Activated CD4-positive, alpha-beta memory T cell treated with anti-CD3 and anti-CD28 coated beads for 36 hours (primary cell): ENCODE measurements at regions of chr9 and their contacts with region 1.

Region 1: GRCh38 chr9:132412089-132412488 is 2.1 kb downstream of the CFAP77 start:
- DNase-seq: peak; percentile 48
- H3K4me3 Mint-ChIP-seq: no peak overlapping the region
- H3K27ac Mint-ChIP-seq: no peak overlapping the region
- H3K4me1 Mint-ChIP-seq: peaks cover 26% of the 10 kb centered on the region
- H3K27me3 Mint-ChIP-seq: peaks cover 48% of the 10 kb centered on the region

Region 2: DNA sequence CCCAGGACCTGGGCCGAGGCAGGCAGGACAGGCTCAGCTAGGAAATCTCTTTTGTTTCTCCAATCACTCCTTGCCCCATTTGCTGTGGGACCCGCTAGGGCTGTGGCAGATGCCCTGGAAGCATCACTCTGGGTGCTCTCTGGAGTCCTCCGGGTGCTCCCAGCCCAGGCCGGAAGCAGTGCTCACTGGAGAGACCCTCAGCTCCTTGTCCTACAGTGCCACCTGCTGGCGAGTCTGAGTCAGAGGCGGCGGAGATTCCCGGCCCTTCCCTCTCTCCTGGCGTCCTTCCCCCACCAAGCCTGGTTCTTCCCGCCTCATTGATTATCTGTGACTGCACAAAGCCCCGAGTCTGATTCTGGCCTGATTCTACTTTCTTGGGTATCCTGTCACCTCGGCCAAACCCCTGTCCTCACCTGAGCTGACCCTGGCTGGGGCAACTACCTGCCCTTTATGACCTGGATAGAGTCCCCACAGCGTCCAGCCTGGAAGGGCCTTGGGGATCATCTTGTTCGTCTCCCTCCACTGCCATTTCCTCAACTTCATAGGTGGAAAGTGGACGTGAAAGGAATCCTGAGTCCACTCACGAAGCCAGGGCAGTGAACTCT is 163.0 kb after region 1 on chr9:
- CTCF ChIA-PET with region 1: interaction called, 46 read pairs
- POLR2A ChIA-PET with region 1: no interaction called
- intact Hi-C with region 1: no loop called
- DNase-seq: peak; percentile 67
- H3K4me3 Mint-ChIP-seq: no peak overlapping the region
- H3K27ac Mint-ChIP-seq: no peak overlapping the region
- H3K4me1 Mint-ChIP-seq: no peaks in the 10 kb centered on the region
- H3K27me3 Mint-ChIP-seq: peaks cover 46% of the 10 kb centered on the region

Region 3: GRCh38 chr9:132800038-132800648 is 388.1 kb after region 1 on chr9:
- CTCF ChIA-PET with region 1: no interaction called
- POLR2A ChIA-PET with region 1: no interaction called
- intact Hi-C with region 1: loop called (anchors 2 kb)
- DNase-seq: peak; percentile 74
- H3K4me3 Mint-ChIP-seq: no peak overlapping the region
- H3K27ac Mint-ChIP-seq: no peak overlapping the region
- H3K4me1 Mint-ChIP-seq: peaks cover 5% of the 10 kb centered on the region
- H3K27me3 Mint-ChIP-seq: peaks cover 28% of the 10 kb centered on the region

Region 4: DNA sequence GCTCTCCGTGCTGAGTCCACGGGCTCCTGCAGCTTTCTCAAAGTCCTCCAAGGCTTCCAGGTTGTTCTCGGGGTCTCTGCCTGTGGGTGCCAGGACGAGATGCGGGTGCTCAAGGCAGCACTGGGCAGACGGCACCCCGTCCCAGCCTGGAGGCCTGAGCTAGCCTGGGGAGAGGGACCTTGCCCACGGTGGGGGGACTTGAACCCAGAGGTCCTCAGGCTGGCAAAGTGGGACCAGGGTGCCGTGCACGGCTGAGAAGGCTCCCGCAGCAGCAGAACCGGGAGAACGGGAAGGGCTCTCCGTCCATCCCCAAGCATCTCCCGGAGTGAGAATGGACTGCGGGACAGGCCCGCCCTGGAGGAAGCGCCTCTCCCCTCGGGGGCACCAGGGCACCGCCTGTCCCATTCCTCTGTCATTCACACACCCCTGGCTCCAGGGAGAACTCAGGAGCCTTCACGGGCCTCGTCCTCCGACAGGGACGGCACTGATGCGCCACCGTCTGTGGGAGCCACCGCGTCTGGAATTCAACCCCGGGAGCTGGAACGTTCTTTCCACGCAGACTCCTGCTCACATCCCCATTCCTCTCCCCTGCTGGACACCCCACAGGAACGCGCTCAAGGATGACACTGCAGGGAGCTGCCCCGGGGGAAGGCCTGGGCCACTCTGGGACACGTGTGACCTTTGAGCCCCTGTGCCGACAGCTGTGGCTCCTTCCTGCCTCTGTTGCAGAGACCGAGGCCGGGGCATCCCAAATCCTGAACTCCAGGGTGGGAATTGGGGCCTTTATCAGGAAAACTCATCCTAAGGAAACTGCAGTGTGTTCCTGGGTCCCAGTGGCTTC is 813.3 kb after region 1 on chr9:
- CTCF ChIA-PET with region 1: no interaction called
- POLR2A ChIA-PET with region 1: no interaction called
- intact Hi-C with region 1: no loop called
- DNase-seq: no peak
- H3K4me3 Mint-ChIP-seq: no peak overlapping the region
- H3K27ac Mint-ChIP-seq: no peak overlapping the region
- H3K4me1 Mint-ChIP-seq: no peaks in the 10 kb centered on the region
- H3K27me3 Mint-ChIP-seq: peaks cover 15% of the 10 kb centered on the region